ENCODE measurements at regions of chr17 and their contacts with region 1.

Region 1: DNA sequence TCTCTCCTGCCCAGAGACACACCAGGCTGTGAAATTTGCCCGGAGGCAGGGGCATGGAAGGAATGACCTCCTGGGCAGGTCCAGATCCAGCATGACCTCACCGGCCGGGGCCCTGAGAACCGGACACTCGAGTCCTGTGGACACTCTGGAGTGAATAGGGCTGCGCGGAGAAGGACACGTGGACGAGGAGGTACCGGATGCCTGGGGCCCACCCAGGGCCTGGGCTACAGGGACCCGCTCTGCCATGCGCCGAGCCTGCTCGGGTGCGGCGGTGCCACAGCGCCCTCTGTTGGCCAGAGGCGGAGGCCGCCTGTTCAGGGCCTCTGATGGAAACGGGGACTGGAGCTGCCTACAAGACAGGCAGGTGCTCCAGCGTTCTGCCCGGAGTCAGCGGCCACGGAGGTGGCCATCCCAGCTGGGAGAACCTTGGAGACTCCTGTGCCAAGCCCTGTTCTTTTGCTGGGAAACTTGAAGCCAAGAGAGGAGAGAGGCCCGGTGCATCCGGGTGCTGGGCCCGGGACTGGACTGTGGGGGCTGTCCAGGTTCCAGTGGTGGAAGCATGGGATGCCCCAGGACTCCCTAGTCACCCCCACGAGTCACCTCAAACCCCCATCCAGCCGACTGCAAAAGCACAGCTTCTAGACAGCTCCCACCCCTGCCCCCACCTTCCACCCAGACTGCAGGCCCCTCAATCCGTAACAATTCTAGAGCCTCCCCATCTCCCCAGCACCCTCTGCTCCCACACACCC is 19.3 kb upstream of the NXPH3 start:
- DNase-seq: peak in 1 of 2 experiments; percentile 98
- H3K4me3 ChIP-seq: peak overlapping the region in 1 of 4 experiments; percentile 15; a peak in 1 of 8 replicates
- H3K27ac ChIP-seq: no peak overlapping the region
- H3K4me1 ChIP-seq: no peaks in the 10 kb centered on the region
- H3K27me3 ChIP-seq: peaks cover 0 to 3% (median 1%) of the 10 kb centered on the region in 4 experiments; a peak in 2 of 7 replicates
- CTCF ChIP-seq: peak; percentile 94 to 98 (median 98)
- EP300 ChIP-seq: peak in 1 of 2 experiments; percentile 36; a peak in 1 of 3 replicates
- POLR2A ChIP-seq: no peak
- RAD21 ChIP-seq: peak; percentile 97 to 99

Region 2: DNA sequence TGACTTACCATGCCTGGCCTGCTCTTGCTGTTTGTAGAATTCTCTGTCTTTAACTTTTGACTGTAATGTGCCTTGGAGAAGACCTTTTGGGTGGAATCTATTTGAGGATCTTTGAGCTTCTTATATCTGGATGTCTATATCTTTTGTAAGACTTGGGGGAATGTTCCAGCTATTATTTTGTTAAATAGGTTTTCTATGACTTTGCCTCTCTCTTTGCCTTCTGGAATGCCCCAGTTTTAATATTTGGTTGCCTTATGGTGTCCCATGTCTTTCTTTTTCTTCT is 131.5 kb before region 1 on chr17:
- CTCF ChIA-PET with region 1: interaction called, 40 read pairs
- POLR2A ChIA-PET with region 1: no interaction called
- DNase-seq: no peak
- H3K4me3 ChIP-seq: no peak overlapping the region
- H3K27ac ChIP-seq: no peak overlapping the region
- H3K4me1 ChIP-seq: no peaks in the 10 kb centered on the region
- H3K27me3 ChIP-seq: no peaks in the 10 kb centered on the region
- CTCF ChIP-seq: no peak
- EP300 ChIP-seq: no peak
- POLR2A ChIP-seq: no peak
- RAD21 ChIP-seq: no peak

Region 3: GRCh38 chr17:49461580-49461979 is 94.8 kb before region 1 on chr17:
- CTCF ChIA-PET with region 1: interaction called, 12 read pairs
- POLR2A ChIA-PET with region 1: no interaction called
- DNase-seq: no peak
- H3K4me3 ChIP-seq: no peak overlapping the region
- H3K27ac ChIP-seq: no peak overlapping the region
- H3K4me1 ChIP-seq: peaks cover 0 to 2% (median 0%) of the 10 kb centered on the region in 4 experiments; a peak in 2 of 7 replicates
- H3K27me3 ChIP-seq: peaks cover 0 to 3% (median 0%) of the 10 kb centered on the region in 4 experiments; a peak in 1 of 7 replicates
- CTCF ChIP-seq: no peak
- EP300 ChIP-seq: no peak
- POLR2A ChIP-seq: no peak
- RAD21 ChIP-seq: no peak

Region 4: DNA sequence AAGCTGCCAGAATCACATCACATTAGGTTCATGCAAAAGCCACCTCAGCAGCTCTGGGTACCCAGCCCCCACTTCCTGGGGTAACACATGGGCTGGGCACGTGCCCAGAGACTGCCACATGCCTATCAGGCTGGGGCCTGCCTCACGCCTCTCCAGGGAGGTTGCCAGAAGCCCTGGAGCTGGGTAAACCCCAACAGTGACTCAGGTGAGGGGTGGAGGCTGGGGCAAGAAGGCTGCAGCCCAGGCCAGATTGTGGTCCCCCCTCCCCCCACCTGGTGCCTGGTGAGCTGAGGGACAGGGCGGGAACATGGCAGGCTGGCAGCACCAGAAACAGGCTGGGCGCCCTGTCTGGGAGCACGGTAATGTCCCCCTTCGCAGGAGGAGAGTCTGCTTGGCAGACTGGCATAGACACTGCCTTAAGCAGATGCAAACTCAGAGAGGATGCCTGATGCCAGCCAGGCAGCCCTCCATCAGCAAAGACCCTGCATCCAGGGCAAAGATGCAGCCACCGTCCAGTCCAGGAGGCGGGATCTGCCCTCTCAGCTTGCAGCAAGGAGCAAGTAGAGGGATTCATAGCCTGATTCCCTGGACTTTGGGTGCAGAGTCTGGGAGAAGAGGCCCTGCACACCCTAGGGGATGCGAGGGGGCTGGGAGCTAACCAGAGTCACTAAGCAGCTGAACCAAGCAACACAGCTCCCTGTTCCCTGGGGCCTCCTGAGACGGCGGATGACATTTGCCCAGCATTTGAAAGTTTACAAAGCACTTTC is 32.5 kb before region 1 on chr17:
- CTCF ChIA-PET with region 1: interaction called, 44 read pairs
- POLR2A ChIA-PET with region 1: no interaction called
- DNase-seq: peak in 1 of 2 experiments; percentile 45
- H3K4me3 ChIP-seq: no peak overlapping the region
- H3K27ac ChIP-seq: no peak overlapping the region
- H3K4me1 ChIP-seq: peaks cover 0 to 6% (median 0%) of the 10 kb centered on the region in 4 experiments; a peak in 3 of 7 replicates
- H3K27me3 ChIP-seq: no peaks in the 10 kb centered on the region
- CTCF ChIP-seq: no peak
- EP300 ChIP-seq: no peak
- POLR2A ChIP-seq: no peak
- RAD21 ChIP-seq: no peak

Region 5: DNA sequence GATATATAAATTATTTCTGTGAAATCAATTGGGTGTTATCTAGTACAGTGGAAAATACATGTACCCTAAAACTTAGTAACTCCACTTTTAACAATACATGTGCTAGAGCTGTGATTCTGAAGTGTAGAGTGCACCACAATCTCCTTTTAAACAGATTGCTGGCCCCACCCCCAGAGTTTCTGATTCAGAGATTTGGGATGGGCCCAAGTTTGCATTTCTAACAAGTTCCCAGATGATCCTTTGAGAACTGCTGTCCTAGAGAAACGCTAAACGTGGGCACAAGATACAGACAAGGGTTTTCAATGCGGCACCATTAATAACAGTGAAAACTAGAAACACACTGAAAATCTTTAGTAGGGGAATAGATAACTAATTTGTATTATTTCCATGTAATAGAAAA is 68.5 kb after region 1 on chr17:
- CTCF ChIA-PET with region 1: interaction called, 10 read pairs
- POLR2A ChIA-PET with region 1: no interaction called
- DNase-seq: no peak
- H3K4me3 ChIP-seq: no peak overlapping the region
- H3K27ac ChIP-seq: no peak overlapping the region
- H3K4me1 ChIP-seq: peaks cover 0 to 2% (median 0%) of the 10 kb centered on the region in 4 experiments; a peak in 1 of 7 replicates
- H3K27me3 ChIP-seq: no peaks in the 10 kb centered on the region
- CTCF ChIP-seq: no peak
- EP300 ChIP-seq: no peak
- POLR2A ChIP-seq: no peak
- RAD21 ChIP-seq: no peak

Region 6: GRCh38 chr17:49763735-49764558 is 207.6 kb after region 1 on chr17 and contains the start of gene FAM117A:
- CTCF ChIA-PET with region 1: no interaction called
- POLR2A ChIA-PET with region 1: no interaction called
- DNase-seq: peak; percentile 91 to 98
- H3K4me3 ChIP-seq: peak within 1 kb of the TSS; percentile 68 to 99 (median 80)
- H3K27ac ChIP-seq: peak within 1 kb of the TSS; percentile 21
- H3K4me1 ChIP-seq: peaks cover 0 to 18% (median 3%) of the 10 kb centered on the region in 4 experiments; a peak in 5 of 7 replicates
- H3K27me3 ChIP-seq: no peaks in the 10 kb centered on the region
- CTCF ChIP-seq: peak in 1 of 3 experiments; percentile 3; a peak in 1 of 4 replicates
- EP300 ChIP-seq: no peak
- POLR2A ChIP-seq: peak; percentile 83 to 89
- RAD21 ChIP-seq: no peak
- total RNA-seq, gene FAM117A: 25.3 and 28.4 TPM in 2 replicates